ENCODE measurements at regions of chr17 and their contacts with region 1.

Region 1: GRCh38 chr17:77429919-77430752 is 289.4 kb downstream of the SEC14L1 start:
- DNase-seq: peak; percentile 91 to 94
- ATAC-seq: peak; percentile 64 to 85 (median 80)
- H3K4me3 ChIP-seq: no peak overlapping the region
- H3K27ac ChIP-seq: peak overlapping the region; percentile 71
- H3K4me1 ChIP-seq: peaks cover 80% of the 10 kb centered on the region
- H3K27me3 ChIP-seq: no peaks in the 10 kb centered on the region
- CTCF ChIP-seq: peak; percentile 65

Region 2: DNA sequence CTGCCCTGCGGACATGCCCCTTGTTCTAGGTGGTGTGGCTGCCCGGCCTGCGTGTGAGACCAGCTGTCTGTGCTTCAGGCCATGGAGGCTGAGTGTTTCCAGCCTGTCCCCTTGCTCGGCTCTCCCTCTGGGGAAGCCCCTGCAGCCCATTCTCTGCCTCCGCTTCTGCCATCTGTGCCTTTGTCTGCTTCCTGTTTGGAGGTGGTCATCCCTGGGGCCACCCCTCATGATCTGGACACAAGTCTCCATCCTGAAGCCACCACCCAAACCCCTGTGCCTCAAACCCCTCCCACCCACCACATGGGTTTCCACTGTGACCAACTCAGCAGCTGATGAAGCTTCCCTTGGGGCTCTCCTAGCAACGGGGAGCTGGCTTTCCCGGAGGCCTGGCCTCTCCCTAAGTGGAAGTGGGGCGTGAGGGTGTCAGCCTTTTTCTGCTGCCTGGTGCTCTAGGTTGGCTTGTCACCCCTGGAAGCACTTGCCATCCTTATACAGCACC is 104.5 kb before region 1 on chr17:
- intact Hi-C with region 1: loop called in 1 of 2 experiments (anchors 5 kb)
- DNase-seq: no peak
- ATAC-seq: no peak
- H3K4me3 ChIP-seq: no peak overlapping the region
- H3K27ac ChIP-seq: peak overlapping the region; percentile 88
- H3K4me1 ChIP-seq: peaks cover 48% of the 10 kb centered on the region
- H3K27me3 ChIP-seq: no peaks in the 10 kb centered on the region
- CTCF ChIP-seq: no peak

Region 3: DNA sequence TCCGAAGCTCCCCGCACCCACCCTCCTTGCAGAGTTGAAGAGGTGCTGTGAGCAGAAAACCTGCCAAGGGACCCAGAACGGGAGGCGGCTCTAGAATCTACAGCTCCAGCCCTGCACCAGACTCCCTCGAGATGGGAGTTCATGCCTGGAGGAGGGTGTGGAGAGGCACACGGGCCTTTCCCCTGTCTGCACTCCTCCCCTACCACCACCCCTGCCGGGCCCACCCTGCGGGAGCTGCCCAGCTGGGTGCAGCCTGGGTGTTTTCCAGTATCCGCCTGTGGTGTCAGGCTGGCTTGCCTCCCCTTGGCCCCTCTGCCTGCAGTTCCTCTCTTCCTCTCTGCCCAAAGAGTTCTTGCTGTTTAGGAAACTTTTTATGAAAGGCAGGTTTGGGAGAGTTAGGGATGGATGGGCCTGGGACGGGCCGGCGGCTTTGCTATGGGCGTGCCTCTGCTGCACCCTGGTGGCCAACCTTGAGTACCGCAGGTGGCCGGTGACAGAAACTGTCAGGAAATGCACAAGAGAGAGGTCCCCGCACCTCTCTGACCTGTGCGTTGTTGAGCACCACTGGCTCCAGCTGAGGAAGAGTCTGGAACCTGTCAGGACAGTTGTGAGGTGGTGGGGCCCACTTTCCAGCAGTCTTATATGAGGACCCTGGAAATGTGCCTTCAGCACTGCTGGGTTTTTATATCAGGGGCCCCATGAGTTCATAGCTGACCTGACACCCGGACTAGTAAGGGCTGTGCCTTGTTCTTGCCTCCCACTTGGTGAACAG is 64.7 kb after region 1 on chr17:
- intact Hi-C with region 1: loop called (anchors 1 to 2 kb)
- DNase-seq: peak; percentile 79 to 87
- ATAC-seq: peak; percentile 69 to 78 (median 76)
- H3K4me3 ChIP-seq: no peak overlapping the region
- H3K27ac ChIP-seq: no peak overlapping the region
- H3K4me1 ChIP-seq: peaks cover 12% of the 10 kb centered on the region
- H3K27me3 ChIP-seq: no peaks in the 10 kb centered on the region
- CTCF ChIP-seq: peak; percentile 98

Region 4: GRCh38 chr17:77892469-77893143 is 462.5 kb after region 1 on chr17:
- intact Hi-C with region 1: no loop called
- DNase-seq: peak in 1 of 2 donors; percentile 50
- ATAC-seq: no peak
- H3K4me3 ChIP-seq: no peak overlapping the region
- H3K27ac ChIP-seq: no peak overlapping the region
- H3K4me1 ChIP-seq: peaks cover 7% of the 10 kb centered on the region
- H3K27me3 ChIP-seq: no peaks in the 10 kb centered on the region
- CTCF ChIP-seq: no peak